Heart left ventricle (tissue), 16 donors: ENCODE measurements at regions of chr5 and their contacts with region 1.

Region 1: GRCh38 chr5:40914835-40915234 is 5.5 kb downstream of the C7 start:
- DNase-seq: no peak
- ATAC-seq: peak in 3 of 4 donors; percentile 39 to 76 (median 64)
- H3K4me3 ChIP-seq: peak overlapping the region in 9 of 12 donors; percentile 5 to 47 (median 20)
- H3K27ac ChIP-seq: peak overlapping the region in 9 of 12 donors; percentile 8 to 65 (median 44)
- H3K4me1 ChIP-seq: peaks cover 0 to 40% (median 9%) of the 10 kb centered on the region in 12 donors
- H3K27me3 ChIP-seq: no peaks in the 10 kb centered on the region
- CTCF ChIP-seq: no peak
- POLR2A ChIP-seq: no peak

Region 2: GRCh38 chr5:40984884-40985283 is 70.0 kb after region 1 on chr5:
- intact Hi-C with region 1: loop called in 1 of 10 experiments (anchors 10 kb)
- DNase-seq: no peak
- ATAC-seq: no peak
- H3K4me3 ChIP-seq: no peak overlapping the region
- H3K27ac ChIP-seq: no peak overlapping the region
- H3K4me1 ChIP-seq: peaks cover 0 to 3% (median 0%) of the 10 kb centered on the region in 12 donors
- H3K27me3 ChIP-seq: no peaks in the 10 kb centered on the region
- CTCF ChIP-seq: no peak
- POLR2A ChIP-seq: no peak

Region 3: GRCh38 chr5:41115281-41115680 is 200.4 kb after region 1 on chr5:
- intact Hi-C with region 1: loop called in 1 of 10 experiments (anchors 10 kb)
- DNase-seq: no peak
- ATAC-seq: no peak
- H3K4me3 ChIP-seq: no peak overlapping the region
- H3K27ac ChIP-seq: no peak overlapping the region
- H3K4me1 ChIP-seq: no peaks in the 10 kb centered on the region
- H3K27me3 ChIP-seq: no peaks in the 10 kb centered on the region
- CTCF ChIP-seq: no peak
- POLR2A ChIP-seq: no peak